Panc1 (cell line): ENCODE measurements at regions of chr5 and their contacts with region 1.

Region 1: GRCh38 chr5:158429542-158429941 is 570.6 kb upstream of the CLINT1 start:
- DNase-seq: no peak
- ATAC-seq: no peak
- H3K4me3 ChIP-seq: no peak overlapping the region
- H3K27ac ChIP-seq: no peak overlapping the region
- H3K4me1 ChIP-seq: no peaks in the 10 kb centered on the region
- H3K27me3 ChIP-seq: no peaks in the 10 kb centered on the region
- CTCF ChIP-seq: no peak

Region 2: GRCh38 chr5:158194561-158194976 is 235.0 kb before region 1 on chr5:
- CTCF ChIA-PET with region 1: no interaction called
- POLR2A ChIA-PET with region 1: no interaction called
- in situ Hi-C with region 1: no loop called
- intact Hi-C with region 1: loop called (anchors 1 kb)
- DNase-seq: no peak
- ATAC-seq: no peak
- H3K4me3 ChIP-seq: no peak overlapping the region
- H3K27ac ChIP-seq: no peak overlapping the region
- H3K4me1 ChIP-seq: no peaks in the 10 kb centered on the region
- H3K27me3 ChIP-seq: no peaks in the 10 kb centered on the region; the same call in 1 of the 2 replicates
- CTCF ChIP-seq: no peak